ENCODE measurements at regions of chr10 and their contacts with region 1.

Region 1: DNA sequence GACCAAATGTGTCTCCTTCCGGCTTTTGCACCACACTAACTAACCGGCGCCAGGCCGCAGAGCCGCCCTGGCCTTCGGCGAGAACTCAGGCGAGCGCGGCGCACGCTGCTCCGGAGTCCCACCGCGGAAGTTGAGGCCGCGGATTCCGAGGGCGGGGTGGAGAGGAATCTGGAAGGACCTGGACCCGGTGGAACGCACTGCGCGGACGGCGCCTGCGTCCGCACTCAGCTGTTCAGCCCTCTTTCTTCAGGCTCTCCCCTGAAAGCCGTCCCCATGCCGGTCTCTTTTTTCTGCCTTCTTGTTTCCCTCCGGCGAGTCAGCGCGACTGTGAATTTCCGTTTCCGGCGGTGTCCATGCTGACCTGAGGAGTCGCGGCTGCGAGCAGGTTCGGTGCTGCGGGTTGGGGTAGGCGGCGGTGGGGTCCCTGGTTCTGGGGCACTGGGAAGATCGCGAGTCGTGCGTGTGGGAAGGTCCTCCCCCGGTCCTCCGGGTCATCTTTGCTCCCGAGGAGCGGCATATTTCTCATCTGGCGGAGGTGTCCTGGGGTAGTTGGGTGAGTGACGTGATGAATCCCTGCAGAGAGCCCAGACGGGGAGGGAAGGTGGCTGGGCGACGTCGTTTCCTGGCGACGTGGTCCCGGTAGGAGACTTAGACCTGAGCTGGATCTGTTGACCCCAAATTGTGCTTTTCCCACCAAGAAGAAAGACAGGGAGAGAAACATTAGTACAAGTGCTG is at the start of gene BMS1:
- DNase-seq: peak; percentile 88 to 96
- ATAC-seq: peak; percentile 97
- H3K4me3 ChIP-seq: peak within 1 kb of the TSS; percentile 74
- H3K27ac ChIP-seq: peak within 1 kb of the TSS; percentile 98 to 99
- H3K4me1 ChIP-seq: peaks cover 13% of the 10 kb centered on the region
- CTCF ChIP-seq: no peak
- EP300 ChIP-seq: no peak
- POLR2A ChIP-seq: peak; percentile 89
- RAD21 ChIP-seq: no peak
- polyA plus RNA-seq, gene BMS1: 14.4 and 17.3 TPM in 2 replicates

Region 2: DNA sequence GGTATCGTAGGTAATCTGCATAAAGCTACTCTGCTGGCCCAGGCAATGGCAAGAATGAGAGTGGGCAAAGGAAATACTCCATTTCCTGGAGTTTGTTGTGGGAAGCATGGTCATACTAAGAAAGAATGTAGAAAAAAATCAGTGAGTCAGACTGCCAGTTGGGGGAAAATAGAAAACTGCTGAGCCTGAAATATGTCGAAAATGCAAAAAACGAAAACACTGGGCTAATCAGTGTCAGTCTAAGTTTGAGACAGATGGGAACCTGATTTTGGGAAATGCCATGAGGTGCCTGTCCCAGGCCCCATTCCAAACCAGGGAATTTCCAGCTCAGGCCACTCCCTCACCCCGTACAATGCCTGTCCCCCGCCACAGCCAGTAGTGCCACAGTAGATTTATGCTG is 294.2 kb before region 1 on chr10:
- CTCF ChIA-PET with region 1: no interaction called
- POLR2A ChIA-PET with region 1: no interaction called
- DNase-seq: no peak
- ATAC-seq: no peak
- H3K4me3 ChIP-seq: no peak overlapping the region
- H3K27ac ChIP-seq: no peak overlapping the region
- H3K4me1 ChIP-seq: no peaks in the 10 kb centered on the region
- CTCF ChIP-seq: no peak
- EP300 ChIP-seq: no peak
- POLR2A ChIP-seq: no peak
- RAD21 ChIP-seq: no peak

Region 3: DNA sequence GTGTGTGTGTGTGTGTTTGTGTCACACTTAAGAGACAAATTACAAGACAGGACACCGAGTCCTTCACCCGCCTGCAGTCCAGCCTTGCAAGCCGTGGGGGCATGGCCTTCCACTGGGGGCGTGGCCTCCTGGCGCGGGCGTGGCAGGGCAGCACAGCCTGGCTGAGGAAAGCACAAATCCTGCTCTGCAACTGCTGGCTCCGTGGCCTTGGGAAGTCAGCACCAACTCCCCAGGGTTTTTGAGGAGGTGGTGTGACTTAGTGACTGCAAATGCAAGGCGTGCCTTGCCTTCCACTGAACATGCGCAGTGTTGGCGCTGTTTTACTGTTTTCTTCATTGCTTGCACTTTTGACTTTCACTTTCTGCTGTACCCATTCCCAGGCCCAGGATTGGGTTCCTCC is 13.0 kb before region 1 on chr10:
- CTCF ChIA-PET with region 1: interaction called, 4 read pairs
- POLR2A ChIA-PET with region 1: interaction called, 10 read pairs
- DNase-seq: peak; percentile 31 to 44
- ATAC-seq: peak; percentile 82 to 88; a peak in 5 of 6 replicates
- H3K4me3 ChIP-seq: peak overlapping the region; percentile 36; the same call in 2 of the 3 replicates
- H3K27ac ChIP-seq: peak overlapping the region; percentile 31 to 50; a peak in 2 of 6 replicates
- H3K4me1 ChIP-seq: no peaks in the 10 kb centered on the region; the same call in 2 of the 3 replicates
- CTCF ChIP-seq: no peak
- EP300 ChIP-seq: no peak
- POLR2A ChIP-seq: no peak
- RAD21 ChIP-seq: no peak

Measured in A549 (cell line).